ENCODE measurements at regions of chr6 and their contacts with region 1.

Region 1: GRCh38 chr6:70040766-70041165 is 174.4 kb downstream of the COL19A1 start:
- DNase-seq: no peak
- ATAC-seq: no peak
- H3K4me3 ChIP-seq: no peak overlapping the region
- H3K27ac ChIP-seq: no peak overlapping the region
- H3K4me1 ChIP-seq: no peaks in the 10 kb centered on the region
- H3K27me3 ChIP-seq: no peaks in the 10 kb centered on the region
- CTCF ChIP-seq: no peak

Region 2: DNA sequence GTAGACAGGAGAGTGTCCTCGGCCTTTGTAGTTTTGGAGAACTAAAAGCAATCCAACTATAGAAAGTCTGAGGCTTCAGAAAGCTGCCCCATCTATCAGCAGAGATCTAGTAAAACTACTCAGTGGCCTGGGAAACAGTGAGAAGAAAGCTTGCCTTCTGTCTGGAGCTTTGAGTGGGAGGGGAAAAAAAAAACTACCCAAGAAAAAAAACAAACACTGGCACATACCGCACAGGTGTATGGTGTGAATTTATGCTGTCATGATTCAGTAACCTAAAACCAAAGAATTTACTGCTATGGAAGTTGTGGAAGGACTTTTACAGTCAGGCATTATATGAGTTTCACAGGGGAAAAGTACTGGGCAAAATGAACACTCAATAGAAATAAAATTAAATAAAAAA is 1125.2 kb before region 1 on chr6:
- CTCF ChIA-PET with region 1: no interaction called
- POLR2A ChIA-PET with region 1: interaction called, 11 read pairs
- intact Hi-C with region 1: no loop called
- DNase-seq: no peak
- ATAC-seq: no peak
- H3K4me3 ChIP-seq: no peak overlapping the region
- H3K27ac ChIP-seq: no peak overlapping the region
- H3K4me1 ChIP-seq: no peaks in the 10 kb centered on the region
- H3K27me3 ChIP-seq: peaks cover 12% of the 10 kb centered on the region
- CTCF ChIP-seq: no peak

Measured in PC-3 (cell line).